ENCODE measurements at regions of chr11 and their contacts with region 1.

Region 1: DNA sequence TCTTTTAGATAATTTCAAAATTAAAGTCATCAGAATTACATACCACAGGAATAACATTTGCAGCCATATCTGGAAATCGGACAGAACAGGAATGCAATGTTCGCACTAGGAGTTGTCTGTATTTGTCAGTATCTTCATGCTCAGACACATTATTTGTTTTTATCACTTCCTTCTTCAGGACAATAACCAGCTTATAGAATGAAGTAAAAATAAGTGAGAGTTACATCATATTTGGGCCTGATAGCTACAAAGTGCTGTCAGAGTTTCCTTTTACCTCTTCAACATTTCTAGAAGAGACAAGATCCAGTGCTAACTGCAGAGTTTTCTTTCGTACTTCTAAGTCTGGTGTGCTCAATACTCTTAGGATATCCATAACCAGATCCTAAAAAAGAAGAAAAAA is 18.9 kb downstream of the COPB1 start:
- DNase-seq: no peak
- ATAC-seq: no peak
- H3K4me3 Mint-ChIP-seq: peak overlapping the region; percentile 23
- H3K27ac Mint-ChIP-seq: peak overlapping the region; percentile 81
- H3K4me1 Mint-ChIP-seq: peaks cover 19% of the 10 kb centered on the region
- H3K27me3 Mint-ChIP-seq: no peaks in the 10 kb centered on the region
- CTCF ChIP-seq: no peak

Region 2: GRCh38 chr11:14499554-14500180 is 19.0 kb after region 1 on chr11 and contains the start of gene COPB1:
- CTCF ChIA-PET with region 1: no interaction called
- POLR2A ChIA-PET with region 1: interaction called, 11 read pairs
- intact Hi-C with region 1: no loop called
- DNase-seq: peak; percentile 96
- ATAC-seq: peak; percentile 94
- H3K4me3 Mint-ChIP-seq: peak within 1 kb of the TSS; percentile 96
- H3K27ac Mint-ChIP-seq: peak within 1 kb of the TSS; percentile 99
- H3K4me1 Mint-ChIP-seq: peaks cover 34% of the 10 kb centered on the region
- H3K27me3 Mint-ChIP-seq: no peaks in the 10 kb centered on the region
- CTCF ChIP-seq: no peak
- total RNA-seq, gene COPB1: 90.9 to 93.5 TPM

Region 3: GRCh38 chr11:14554959-14555358 is 74.2 kb after region 1 on chr11:
- CTCF ChIA-PET with region 1: no interaction called
- POLR2A ChIA-PET with region 1: no interaction called
- intact Hi-C with region 1: no loop called
- DNase-seq: peak; percentile 16
- ATAC-seq: peak; percentile 86
- H3K4me3 Mint-ChIP-seq: no peak overlapping the region
- H3K27ac Mint-ChIP-seq: peak overlapping the region; percentile 85
- H3K4me1 Mint-ChIP-seq: peaks cover 36% of the 10 kb centered on the region
- H3K27me3 Mint-ChIP-seq: no peaks in the 10 kb centered on the region
- CTCF ChIP-seq: no peak